ENCODE measurements at regions of chr19 and their contacts with region 1.

Region 1: DNA sequence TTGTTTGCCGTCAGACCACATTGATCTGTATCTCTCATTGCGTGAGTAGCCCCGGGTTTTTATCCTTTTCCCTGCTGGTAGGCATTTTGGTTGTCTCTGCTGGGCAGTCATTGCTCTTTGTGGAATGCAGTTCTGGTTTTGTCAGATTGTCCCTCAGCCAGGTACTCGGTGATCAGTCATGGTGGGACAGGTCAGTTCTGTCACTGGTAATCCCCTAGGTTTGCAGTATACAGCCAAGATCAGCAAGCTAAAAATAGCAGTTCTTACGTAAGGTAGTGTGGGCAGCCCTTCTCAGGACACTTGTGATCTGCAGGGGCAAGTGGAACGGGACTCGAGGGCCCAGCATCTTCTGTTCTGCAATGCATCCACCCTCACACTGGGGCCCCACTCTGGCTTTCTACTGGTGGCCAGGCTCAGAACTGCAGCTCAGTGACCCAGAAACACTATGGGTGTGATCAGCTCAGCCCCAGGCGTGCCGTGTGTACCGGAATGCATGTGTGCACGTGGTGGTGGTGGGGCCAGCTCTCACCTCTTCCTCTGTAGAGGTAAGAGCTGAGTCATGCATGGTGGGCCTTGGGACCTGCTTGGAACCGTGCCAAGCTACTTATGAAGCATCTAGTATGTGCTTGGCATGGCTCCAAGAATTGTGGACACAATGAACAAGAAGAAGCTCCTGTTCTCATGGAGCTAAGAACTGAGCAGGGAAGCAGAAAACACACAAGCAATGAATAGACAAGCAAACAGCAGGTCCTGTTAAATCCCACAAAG is 6.3 kb downstream of the PLEKHF1 start:
- DNase-seq: peak; percentile 75
- H3K4me3 Mint-ChIP-seq: peak overlapping the region; percentile 76
- H3K27ac Mint-ChIP-seq: peak overlapping the region; percentile 92
- H3K4me1 Mint-ChIP-seq: peaks cover 75% of the 10 kb centered on the region
- H3K27me3 Mint-ChIP-seq: no peaks in the 10 kb centered on the region

Region 2: DNA sequence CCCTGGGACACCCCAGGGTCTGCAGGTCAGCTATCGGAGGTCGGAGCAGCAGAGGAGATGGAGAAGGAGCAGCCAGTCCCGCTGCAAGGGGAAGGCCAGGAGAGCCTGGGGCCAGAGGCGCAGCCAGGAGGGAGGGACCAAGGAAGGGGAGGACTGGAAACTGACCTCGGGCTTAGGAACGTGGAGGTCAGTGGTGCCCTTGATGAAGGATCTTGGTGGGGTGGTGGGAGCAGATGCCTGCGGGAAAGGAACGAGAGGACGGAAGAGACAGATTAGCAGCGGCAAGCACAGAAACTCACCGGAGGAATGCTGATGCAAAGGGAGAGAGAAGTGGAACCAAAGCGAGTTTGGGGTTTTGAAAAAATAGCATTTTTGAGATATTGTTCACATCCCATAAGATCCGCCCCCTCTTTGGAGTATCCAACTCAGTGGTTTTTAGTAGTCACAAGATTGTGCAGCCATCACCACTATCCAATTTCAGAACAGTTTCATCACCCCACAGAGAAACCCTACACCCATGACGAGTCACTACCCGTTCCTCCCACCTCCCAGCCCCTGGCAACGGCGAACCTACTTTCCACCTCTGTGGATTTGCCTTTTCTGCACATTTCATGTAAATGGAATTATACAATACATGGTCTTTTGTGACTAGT is 15.8 kb after region 1 on chr19:
- intact Hi-C with region 1: loop called (anchors 1 kb)
- DNase-seq: no peak
- H3K4me3 Mint-ChIP-seq: peak overlapping the region; percentile 32
- H3K27ac Mint-ChIP-seq: peak overlapping the region; percentile 78
- H3K4me1 Mint-ChIP-seq: peaks cover 55% of the 10 kb centered on the region
- H3K27me3 Mint-ChIP-seq: no peaks in the 10 kb centered on the region

Region 3: DNA sequence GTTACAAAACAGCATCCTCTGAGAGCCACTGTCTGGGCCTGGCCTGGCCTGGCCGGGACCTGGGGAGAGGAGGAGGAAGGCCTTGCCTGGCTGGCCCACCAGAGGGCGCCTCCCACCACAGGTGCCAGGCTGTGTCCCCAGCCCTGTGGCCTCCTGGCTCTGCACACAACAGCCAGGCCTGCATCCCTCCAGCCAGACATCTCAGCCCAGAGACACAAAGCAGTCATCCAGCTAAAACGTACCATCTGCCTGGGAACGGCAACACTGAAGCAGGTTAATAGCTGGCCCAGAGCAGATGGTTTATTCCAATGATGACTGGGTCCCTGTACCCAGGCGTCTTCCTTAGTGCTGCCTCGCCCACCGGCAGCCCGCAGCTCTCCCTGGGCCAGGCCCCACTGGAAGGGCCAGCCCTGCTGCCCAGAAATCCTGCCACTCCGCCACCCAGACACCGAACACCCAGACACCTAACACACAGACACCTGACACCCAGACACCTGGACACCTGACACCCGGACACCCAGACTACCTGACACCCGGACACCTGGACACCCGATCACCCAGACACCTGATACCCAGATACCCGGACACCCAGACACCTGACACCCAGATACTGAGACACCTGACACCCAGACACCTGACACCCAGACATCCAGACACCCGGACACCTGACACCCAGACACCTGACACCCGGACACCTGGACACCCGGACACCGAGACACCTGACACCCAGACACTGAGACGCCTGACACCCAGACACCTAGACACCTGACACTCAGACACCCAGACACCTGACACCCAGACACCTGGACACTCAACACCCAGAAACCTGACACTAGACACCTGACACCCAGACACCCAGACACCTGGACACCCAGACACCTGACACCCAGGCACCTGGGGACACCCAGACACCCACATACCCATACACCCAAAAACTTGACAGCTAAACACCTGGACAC is 23.4 kb after region 1 on chr19:
- intact Hi-C with region 1: loop called (anchors 1 kb)
- DNase-seq: peak; percentile 73
- H3K4me3 Mint-ChIP-seq: no peak overlapping the region
- H3K27ac Mint-ChIP-seq: peak overlapping the region; percentile 70
- H3K4me1 Mint-ChIP-seq: peaks cover 15% of the 10 kb centered on the region
- H3K27me3 Mint-ChIP-seq: no peaks in the 10 kb centered on the region

Region 4: GRCh38 chr19:29704562-29705558 is 33.3 kb after region 1 on chr19:
- intact Hi-C with region 1: loop called (anchors 1 kb)
- DNase-seq: no peak
- H3K4me3 Mint-ChIP-seq: peak overlapping the region; percentile 53
- H3K27ac Mint-ChIP-seq: peak overlapping the region; percentile 92
- H3K4me1 Mint-ChIP-seq: peaks cover 52% of the 10 kb centered on the region
- H3K27me3 Mint-ChIP-seq: no peaks in the 10 kb centered on the region